ENCODE measurements at regions of chr12 and their contacts with region 1.

Region 1: GRCh38 chr12:56448860-56449621 is at the start of gene TIMELESS:
- DNase-seq: peak; percentile 95
- ATAC-seq: peak; percentile 96
- H3K4me3 ChIP-seq: peak within 1 kb of the TSS; percentile 69 to 98 (median 83)
- H3K4me3 Mint-ChIP-seq: peak within 1 kb of the TSS; percentile 90
- H3K27ac ChIP-seq: peak within 1 kb of the TSS; percentile 53 to 85
- H3K27ac Mint-ChIP-seq: peak within 1 kb of the TSS; percentile 92
- H3K4me1 ChIP-seq: peaks cover 10 to 12% of the 10 kb centered on the region in 2 donors
- H3K4me1 Mint-ChIP-seq: peaks cover 23% of the 10 kb centered on the region
- H3K27me3 ChIP-seq: no peaks in the 10 kb centered on the region
- H3K27me3 Mint-ChIP-seq: no peaks in the 10 kb centered on the region
- CTCF ChIP-seq: no peak
- total RNA-seq, gene TIMELESS: 44.4 and 46.6 TPM in 2 replicates

Region 2: GRCh38 chr12:56315622-56316473 is 133.2 kb before region 1 on chr12 and contains the start of gene CNPY2:
- CTCF ChIA-PET with region 1: interaction called, 4 read pairs
- POLR2A ChIA-PET with region 1: interaction called, 7 read pairs
- intact Hi-C with region 1: loop called (anchors 1 kb)
- DNase-seq: peak; percentile 99
- ATAC-seq: peak; percentile 86
- H3K4me3 ChIP-seq: peak within 1 kb of the TSS; percentile 78 to 94 (median 91)
- H3K4me3 Mint-ChIP-seq: peak within 1 kb of the TSS; percentile 99
- H3K27ac ChIP-seq: peak within 1 kb of the TSS; percentile 67 to 90
- H3K27ac Mint-ChIP-seq: peak within 1 kb of the TSS; percentile 99
- H3K4me1 ChIP-seq: peaks cover 12 to 15% of the 10 kb centered on the region in 2 donors
- H3K4me1 Mint-ChIP-seq: peaks cover 10% of the 10 kb centered on the region
- H3K27me3 ChIP-seq: no peaks in the 10 kb centered on the region
- H3K27me3 Mint-ChIP-seq: no peaks in the 10 kb centered on the region
- CTCF ChIP-seq: no peak
- total RNA-seq, gene CNPY2: 89.0 and 91.2 TPM in 2 replicates

Region 3: DNA sequence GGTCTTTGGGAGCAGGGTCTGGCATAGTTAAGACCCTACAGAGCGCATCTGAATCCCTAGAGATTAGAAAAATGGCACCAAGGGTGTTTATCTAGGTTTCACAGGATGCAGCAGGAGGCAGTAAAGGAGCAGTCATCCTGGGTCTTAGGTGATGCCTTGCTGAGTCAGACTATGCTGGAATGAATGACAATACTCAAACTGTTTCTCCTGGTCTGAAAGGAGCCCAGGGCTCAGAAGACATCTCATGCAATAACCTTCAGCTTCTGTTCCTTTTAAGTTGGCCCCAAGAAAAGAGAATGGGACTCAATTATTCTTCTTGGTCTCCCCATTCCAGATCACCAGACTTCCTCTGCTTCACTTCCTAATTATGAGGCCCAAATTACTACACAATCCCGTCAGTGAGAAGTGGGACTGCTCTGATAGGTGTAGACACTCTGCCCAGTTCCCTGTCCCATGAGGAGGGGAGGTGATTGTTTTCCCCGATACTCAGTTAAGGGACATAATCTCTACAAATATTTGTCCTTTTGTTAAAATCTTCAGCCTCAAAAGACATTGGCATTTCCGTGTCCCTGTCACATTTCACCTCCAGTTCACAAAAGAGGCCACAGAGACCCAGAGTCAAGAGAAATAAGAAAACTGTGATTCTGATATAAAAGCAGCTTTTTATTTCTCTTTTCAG is 71.6 kb before region 1 on chr12:
- CTCF ChIA-PET with region 1: no interaction called
- POLR2A ChIA-PET with region 1: no interaction called
- intact Hi-C with region 1: loop called (anchors 1 kb)
- DNase-seq: no peak
- ATAC-seq: no peak
- H3K4me3 ChIP-seq: no peak overlapping the region
- H3K4me3 Mint-ChIP-seq: peak overlapping the region; percentile 76
- H3K27ac ChIP-seq: peak overlapping the region; percentile 75 to 80
- H3K27ac Mint-ChIP-seq: peak overlapping the region; percentile 96
- H3K4me1 ChIP-seq: peaks cover 49 to 64% of the 10 kb centered on the region in 2 donors
- H3K4me1 Mint-ChIP-seq: peaks cover 47% of the 10 kb centered on the region
- H3K27me3 ChIP-seq: no peaks in the 10 kb centered on the region
- H3K27me3 Mint-ChIP-seq: no peaks in the 10 kb centered on the region
- CTCF ChIP-seq: no peak

Region 4: DNA sequence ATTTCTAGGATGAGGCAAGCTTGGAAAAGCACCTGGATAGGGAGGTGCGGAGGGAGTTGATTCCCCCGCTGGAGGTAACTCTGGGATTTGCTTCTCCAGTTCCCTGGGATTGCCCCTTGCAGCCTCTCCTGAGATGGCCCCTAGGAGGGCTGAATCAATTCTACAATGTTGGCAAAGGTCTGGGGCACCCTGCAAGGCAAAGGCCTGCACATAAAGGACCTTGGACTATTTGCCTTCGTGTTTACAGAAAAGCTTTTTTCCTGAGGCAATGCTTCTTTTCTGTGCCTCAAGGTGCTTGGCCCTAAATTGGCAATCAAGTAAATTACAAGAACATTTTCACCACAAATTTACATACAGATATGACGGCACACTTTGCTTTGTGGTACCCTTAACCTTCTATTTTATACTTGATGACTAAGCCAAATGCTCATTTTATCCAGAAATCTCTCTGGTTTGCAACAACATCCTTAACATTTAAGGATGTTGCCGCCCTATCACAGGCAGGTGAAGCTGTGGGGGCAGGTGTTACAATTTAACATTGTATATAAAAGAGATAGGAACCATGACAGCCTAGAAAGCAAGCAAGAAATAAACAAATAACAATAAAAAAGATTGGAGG is 40.1 kb before region 1 on chr12:
- CTCF ChIA-PET with region 1: no interaction called
- POLR2A ChIA-PET with region 1: no interaction called
- intact Hi-C with region 1: no loop called
- DNase-seq: no peak
- ATAC-seq: no peak
- H3K4me3 ChIP-seq: no peak overlapping the region
- H3K4me3 Mint-ChIP-seq: no peak overlapping the region
- H3K27ac ChIP-seq: no peak overlapping the region
- H3K27ac Mint-ChIP-seq: no peak overlapping the region
- H3K4me1 ChIP-seq: no peaks in the 10 kb centered on the region
- H3K4me1 Mint-ChIP-seq: no peaks in the 10 kb centered on the region
- H3K27me3 ChIP-seq: no peaks in the 10 kb centered on the region
- H3K27me3 Mint-ChIP-seq: no peaks in the 10 kb centered on the region
- CTCF ChIP-seq: no peak

Region 5: GRCh38 chr12:56488041-56488955 is 39.3 kb after region 1 on chr12 and contains the start of gene GLS2:
- CTCF ChIA-PET with region 1: no interaction called
- POLR2A ChIA-PET with region 1: no interaction called
- intact Hi-C with region 1: loop called (anchors 1 kb)
- DNase-seq: peak; percentile 85
- ATAC-seq: peak; percentile 99
- H3K4me3 ChIP-seq: peak within 1 kb of the TSS; percentile 26 to 79 (median 73)
- H3K4me3 Mint-ChIP-seq: peak within 1 kb of the TSS; percentile 91
- H3K27ac ChIP-seq: no peak within 1 kb of the TSS
- H3K27ac Mint-ChIP-seq: peak within 1 kb of the TSS; percentile 80
- H3K4me1 ChIP-seq: peaks cover 0 to 19% of the 10 kb centered on the region in 2 donors
- H3K4me1 Mint-ChIP-seq: peaks cover 19% of the 10 kb centered on the region
- H3K27me3 ChIP-seq: peaks cover 0 to 9% (median 5%) of the 10 kb centered on the region in 4 experiments
- H3K27me3 Mint-ChIP-seq: peaks cover 17% of the 10 kb centered on the region
- CTCF ChIP-seq: no peak
- total RNA-seq, gene GLS2: 5.3 and 7.2 TPM in 2 replicates

Region 6: DNA sequence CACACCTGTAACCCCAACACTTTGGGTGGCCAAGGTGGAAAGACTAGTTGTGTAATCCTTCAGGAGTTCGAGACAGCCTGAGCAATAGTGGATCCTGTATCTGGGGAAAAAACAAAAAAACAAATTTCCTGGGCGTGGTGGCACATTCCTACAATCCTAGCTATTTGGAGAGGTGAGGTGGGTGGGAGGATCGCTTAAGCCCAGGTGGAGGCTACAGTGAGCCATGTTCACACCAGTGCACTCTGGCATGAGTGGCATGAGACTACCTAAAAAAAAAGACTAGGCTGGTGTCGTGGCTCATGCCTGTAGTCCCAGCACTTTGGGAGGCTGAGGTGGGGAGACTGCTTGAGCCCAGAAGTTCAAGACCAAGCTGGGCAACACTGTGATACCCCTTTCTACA is 221.8 kb after region 1 on chr12:
- CTCF ChIA-PET with region 1: no interaction called
- POLR2A ChIA-PET with region 1: no interaction called
- intact Hi-C with region 1: no loop called
- DNase-seq: no peak
- ATAC-seq: no peak
- H3K4me3 ChIP-seq: no peak overlapping the region
- H3K4me3 Mint-ChIP-seq: no peak overlapping the region
- H3K27ac ChIP-seq: no peak overlapping the region
- H3K27ac Mint-ChIP-seq: peak overlapping the region; percentile 20
- H3K4me1 ChIP-seq: no peaks in the 10 kb centered on the region
- H3K4me1 Mint-ChIP-seq: peaks cover 18% of the 10 kb centered on the region
- H3K27me3 ChIP-seq: no peaks in the 10 kb centered on the region
- H3K27me3 Mint-ChIP-seq: no peaks in the 10 kb centered on the region
- CTCF ChIP-seq: no peak